ENCODE measurements at regions of chr18 and their contacts with region 1.

Region 1: GRCh38 chr18:47204908-47205522 is 28.9 kb upstream of the IER3IP1 start:
- DNase-seq: no peak
- ATAC-seq: no peak

Region 2: GRCh38 chr18:47050468-47050867 is 154.5 kb before region 1 on chr18:
- intact Hi-C with region 1: loop called (anchors 2 kb)
- DNase-seq: no peak
- ATAC-seq: no peak

Region 3: GRCh38 chr18:47100214-47100831 is 104.7 kb before region 1 on chr18:
- intact Hi-C with region 1: loop called (anchors 2 kb)
- DNase-seq: no peak
- ATAC-seq: peak; percentile 39

Region 4: GRCh38 chr18:47226660-47227059 is 21.6 kb after region 1 on chr18:
- intact Hi-C with region 1: no loop called
- DNase-seq: no peak
- ATAC-seq: no peak